Heart right ventricle (tissue), 16 donors: ENCODE measurements at regions of chr14 and their contacts with region 1.

Region 1: DNA sequence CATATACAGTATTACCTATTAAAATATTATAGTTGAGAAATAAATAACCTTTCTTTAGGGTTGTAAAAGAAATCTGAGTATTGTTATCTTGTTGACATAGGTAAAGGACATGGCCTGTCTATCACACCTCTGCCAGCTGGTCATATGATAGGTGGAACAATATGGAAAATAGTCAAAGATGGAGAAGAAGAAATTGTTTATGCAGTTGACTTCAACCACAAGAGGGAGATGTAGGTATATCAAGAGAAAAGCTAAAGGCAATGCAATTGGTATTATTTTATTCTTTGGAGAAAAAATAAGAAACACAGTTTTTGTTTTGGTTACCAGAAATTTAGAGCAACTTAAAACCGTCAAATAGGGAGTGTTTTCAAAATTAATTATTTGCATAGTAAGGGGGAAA is 13.5 kb downstream of the CPSF2 start:
- DNase-seq: no peak
- ATAC-seq: no peak
- H3K4me3 ChIP-seq: no peak overlapping the region
- H3K27ac ChIP-seq: no peak overlapping the region
- H3K4me1 ChIP-seq: peaks cover 0 to 4% (median 0%) of the 10 kb centered on the region in 9 donors
- H3K27me3 ChIP-seq: no peaks in the 10 kb centered on the region
- CTCF ChIP-seq: peak in 8 of 9 donors; percentile 33 to 71 (median 52)

Region 2: GRCh38 chr14:92450351-92451070 is 315.2 kb after region 1 on chr14:
- intact Hi-C with region 1: loop called in 7 of 10 experiments (anchors 5 to 10 kb)
- DNase-seq: no peak
- ATAC-seq: peak in 1 of 8 donors; percentile 43
- H3K4me3 ChIP-seq: no peak overlapping the region
- H3K27ac ChIP-seq: peak overlapping the region in 1 of 10 donors; percentile 75
- H3K4me1 ChIP-seq: peaks cover 3 to 17% (median 9%) of the 10 kb centered on the region in 9 donors
- H3K27me3 ChIP-seq: no peaks in the 10 kb centered on the region
- CTCF ChIP-seq: no peak

Region 3: GRCh38 chr14:92481386-92481785 is 346.1 kb after region 1 on chr14:
- intact Hi-C with region 1: no loop called
- DNase-seq: no peak
- ATAC-seq: peak in 1 of 8 donors; percentile 38
- H3K4me3 ChIP-seq: no peak overlapping the region
- H3K27ac ChIP-seq: peak overlapping the region in 1 of 10 donors; percentile 5
- H3K4me1 ChIP-seq: peaks cover 0 to 19% (median 10%) of the 10 kb centered on the region in 9 donors
- H3K27me3 ChIP-seq: peaks cover 0 to 3% (median 0%) of the 10 kb centered on the region in 7 donors
- CTCF ChIP-seq: peak in 5 of 9 donors; percentile 18 to 42 (median 31)

Region 4: DNA sequence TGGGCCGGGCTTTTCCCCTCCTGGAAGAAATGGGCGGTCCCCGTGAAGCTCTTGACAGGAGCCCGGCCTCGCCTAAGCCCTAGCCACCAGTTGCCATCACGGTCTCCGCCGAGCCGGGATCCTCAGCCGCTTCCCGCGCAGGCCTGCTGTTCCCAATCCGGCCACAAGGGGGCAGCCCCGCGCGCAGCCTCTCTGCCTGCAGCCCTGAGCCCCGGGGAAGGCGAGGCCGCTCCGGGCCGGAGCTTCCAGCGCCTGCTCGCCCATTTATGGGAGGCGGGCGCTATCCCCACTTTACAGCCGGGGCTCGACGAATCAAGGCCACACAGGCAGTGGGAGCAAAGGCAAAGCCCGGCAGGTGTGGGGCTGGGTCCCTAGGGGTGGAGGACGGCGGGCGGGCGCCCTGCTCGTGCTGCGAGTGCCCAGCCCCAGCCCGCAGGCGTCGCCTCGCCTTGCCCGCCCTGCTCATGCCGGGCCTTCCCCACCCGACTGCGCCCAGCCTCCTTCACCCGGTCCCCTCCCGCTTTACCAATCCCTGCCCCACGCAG is 551.7 kb after region 1 on chr14:
- intact Hi-C with region 1: loop called in 5 of 10 experiments (anchors 5 to 10 kb)
- DNase-seq: peak; percentile 66 to 81
- ATAC-seq: peak; percentile 79 to 90 (median 86)
- H3K4me3 ChIP-seq: peak overlapping the region in 9 of 10 donors; percentile 32 to 56 (median 47)
- H3K27ac ChIP-seq: no peak overlapping the region
- H3K4me1 ChIP-seq: peaks cover under 1 to 19% (median 7%) of the 10 kb centered on the region in 9 donors
- H3K27me3 ChIP-seq: no peaks in the 10 kb centered on the region
- CTCF ChIP-seq: peak; percentile 68 to 100 (median 98)